ENCODE measurements at regions of chr9 and their contacts with region 1.

Region 1: DNA sequence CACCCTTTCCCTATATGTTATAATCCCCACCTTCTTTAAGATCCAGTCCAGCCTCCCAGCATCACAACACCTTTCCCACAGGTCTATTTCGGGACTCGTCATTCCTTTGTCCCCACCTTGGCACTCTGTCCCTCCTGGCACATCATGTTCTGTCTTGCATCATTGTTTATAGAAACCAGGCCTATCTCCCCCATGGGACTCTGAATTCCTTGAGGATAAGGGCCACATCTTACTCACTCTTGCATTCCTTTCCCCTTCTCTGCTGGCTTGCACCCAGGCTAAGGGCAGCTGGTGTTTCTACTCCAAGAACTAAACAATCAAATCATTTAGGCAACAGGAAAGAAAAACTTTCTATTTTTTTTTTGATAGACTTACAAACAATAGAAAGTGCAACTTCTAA is 205.7 kb downstream of the AGTPBP1 start:
- DNase-seq: peak in 3 of 5 donors; percentile 31 to 63 (median 43)
- ATAC-seq: peak; percentile 64 to 88 (median 76)
- H3K4me3 ChIP-seq: no peak overlapping the region
- H3K27ac ChIP-seq: peak overlapping the region in 10 of 12 donors; percentile 4 to 57 (median 43)
- H3K4me1 ChIP-seq: peaks cover 0 to 29% (median 14%) of the 10 kb centered on the region in 12 donors
- H3K27me3 ChIP-seq: no peaks in the 10 kb centered on the region
- CTCF ChIP-seq: no peak
- POLR2A ChIP-seq: no peak

Region 2: GRCh38 chr9:85431339-85432102 is 104.6 kb before region 1 on chr9:
- intact Hi-C with region 1: loop called in 1 of 10 experiments (anchors 10 kb)
- DNase-seq: no peak
- ATAC-seq: no peak
- H3K4me3 ChIP-seq: no peak overlapping the region
- H3K27ac ChIP-seq: peak overlapping the region in 8 of 12 donors; percentile 30 to 68 (median 56)
- H3K4me1 ChIP-seq: peaks cover 0 to 11% (median 2%) of the 10 kb centered on the region in 12 donors
- H3K27me3 ChIP-seq: peaks cover 0 to 6% (median 0%) of the 10 kb centered on the region in 9 donors
- CTCF ChIP-seq: no peak
- POLR2A ChIP-seq: no peak

Region 3: DNA sequence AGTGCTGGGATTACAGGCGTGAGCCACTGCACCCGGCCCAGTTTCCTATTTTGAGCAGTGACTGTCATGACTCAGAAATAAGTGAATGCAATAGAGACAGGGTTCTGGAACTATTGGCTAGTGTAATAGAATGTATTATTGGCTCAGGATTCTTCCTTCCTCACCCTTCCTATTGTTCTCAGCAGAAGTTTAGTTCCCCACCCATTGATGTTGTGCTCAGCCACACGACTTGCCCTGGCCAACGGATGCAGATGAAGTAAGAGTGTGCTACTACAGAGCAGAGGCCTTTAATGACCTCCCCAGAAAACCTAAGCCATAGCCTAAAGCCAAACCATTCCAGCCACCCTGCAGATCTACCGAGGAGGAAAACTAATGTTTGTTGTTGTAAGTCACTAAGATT is 82.2 kb before region 1 on chr9:
- intact Hi-C with region 1: loop called in 1 of 10 experiments (anchors 10 kb)
- DNase-seq: peak in 4 of 5 donors; percentile 38 to 49 (median 43)
- ATAC-seq: peak; percentile 71 to 99 (median 84)
- H3K4me3 ChIP-seq: no peak overlapping the region
- H3K27ac ChIP-seq: peak overlapping the region in 3 of 12 donors; percentile 29 to 60 (median 43)
- H3K4me1 ChIP-seq: peaks cover 0 to 4% (median 0%) of the 10 kb centered on the region in 12 donors
- H3K27me3 ChIP-seq: no peaks in the 10 kb centered on the region
- CTCF ChIP-seq: no peak
- POLR2A ChIP-seq: no peak

Region 4: GRCh38 chr9:85569988-85570387 is 33.9 kb after region 1 on chr9:
- intact Hi-C with region 1: no loop called
- DNase-seq: no peak
- ATAC-seq: no peak
- H3K4me3 ChIP-seq: no peak overlapping the region
- H3K27ac ChIP-seq: no peak overlapping the region
- H3K4me1 ChIP-seq: no peaks in the 10 kb centered on the region
- H3K27me3 ChIP-seq: no peaks in the 10 kb centered on the region
- CTCF ChIP-seq: no peak
- POLR2A ChIP-seq: no peak

Region 5: DNA sequence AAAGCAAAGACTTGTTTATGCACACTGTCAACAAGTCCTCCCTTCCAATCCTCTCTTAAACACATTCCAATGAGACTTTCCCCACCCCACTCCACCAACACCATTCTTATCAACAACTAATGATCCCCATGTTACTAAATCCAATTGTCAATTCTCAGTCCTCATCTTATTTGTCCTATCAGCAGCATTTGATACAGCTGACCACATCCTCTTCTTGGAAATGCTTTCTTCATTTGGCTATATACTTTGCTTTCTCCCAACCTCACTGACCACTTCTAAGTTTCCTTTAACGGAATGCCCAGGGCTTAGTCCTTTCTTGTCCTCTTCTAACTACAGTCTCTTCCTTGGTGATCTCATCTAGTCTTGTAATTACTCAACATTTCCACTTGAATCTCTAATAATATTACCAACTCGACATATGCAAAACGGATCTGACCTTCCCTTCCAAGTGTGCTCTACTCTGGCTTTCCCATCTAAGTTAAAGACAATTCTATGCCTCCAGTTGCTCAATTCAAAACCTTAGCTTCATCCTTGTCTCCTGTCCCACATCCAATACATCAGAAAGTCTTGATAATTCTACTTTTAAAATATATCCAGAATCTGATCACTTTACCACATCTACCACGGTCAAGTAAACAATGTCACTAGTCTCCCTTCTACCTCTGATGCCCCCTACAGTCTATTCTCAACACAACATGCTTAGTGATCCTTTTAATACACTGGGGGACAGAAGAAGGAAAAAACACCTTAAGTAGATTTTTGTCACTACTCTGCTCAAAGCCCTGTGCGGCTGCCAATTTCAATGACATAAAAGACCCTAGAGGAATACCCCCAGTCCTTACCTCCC is 180.2 kb after region 1 on chr9:
- intact Hi-C with region 1: no loop called
- DNase-seq: no peak
- ATAC-seq: peak in 1 of 4 donors; percentile 24
- H3K4me3 ChIP-seq: no peak overlapping the region
- H3K27ac ChIP-seq: peak overlapping the region in 1 of 12 donors; percentile 78
- H3K4me1 ChIP-seq: peaks cover 0 to 41% (median 5%) of the 10 kb centered on the region in 12 donors
- H3K27me3 ChIP-seq: no peaks in the 10 kb centered on the region
- CTCF ChIP-seq: peak in 2 of 12 donors; percentile 9 to 10
- POLR2A ChIP-seq: no peak